ENCODE measurements at regions of chr2 and their contacts with region 1.

Region 1: GRCh38 chr2:151409601-151410484 is at the start of gene RIF1:
- DNase-seq: peak; percentile 92
- H3K4me3 ChIP-seq: peak within 1 kb of the TSS; percentile 81 to 91 (median 85)
- H3K27ac ChIP-seq: peak within 1 kb of the TSS; percentile 80
- H3K4me1 ChIP-seq: no peaks in the 10 kb centered on the region
- H3K27me3 ChIP-seq: no peaks in the 10 kb centered on the region
- CTCF ChIP-seq: peak; percentile 32 to 69
- total RNA-seq, gene RIF1: 33.7 to 45.0 TPM

Region 2: DNA sequence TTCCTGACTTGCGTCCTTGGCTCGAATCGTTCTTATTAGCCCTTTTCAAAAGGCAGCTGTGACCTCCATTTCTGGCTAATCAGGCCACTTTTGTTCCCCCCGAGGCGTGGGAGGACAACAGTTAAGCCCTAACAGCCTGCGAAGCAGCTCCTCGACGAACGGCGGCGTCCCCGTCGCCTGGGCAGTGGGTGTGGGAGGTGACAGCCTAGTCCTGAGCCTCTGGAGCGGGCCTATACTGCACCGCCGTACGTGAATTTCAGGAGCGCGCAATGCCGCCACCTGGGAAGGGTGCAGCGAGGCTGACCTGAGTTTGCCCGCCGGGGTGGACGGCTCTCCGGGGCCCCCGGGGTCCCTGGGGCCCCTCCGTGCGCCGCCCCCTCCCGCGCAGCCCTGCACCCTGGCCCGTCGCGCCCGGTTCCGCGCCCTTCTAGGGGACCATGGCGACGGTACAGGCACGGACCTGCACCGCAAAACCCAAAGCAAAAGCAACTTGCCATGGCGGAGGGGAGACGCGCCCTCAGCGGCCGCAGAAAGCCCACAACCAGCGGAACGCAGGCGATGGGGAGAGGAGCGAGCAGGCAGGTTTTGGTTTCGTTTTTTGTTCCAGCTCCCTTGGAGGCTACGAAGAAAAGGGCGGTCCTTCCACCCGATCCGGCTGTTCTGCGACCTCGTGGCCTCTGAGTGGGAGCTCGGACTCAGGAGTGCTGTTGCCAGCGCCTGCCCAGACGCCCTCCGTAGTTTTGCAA is 148.4 kb before region 1 on chr2 and contains the start of gene RBM43:
- CTCF ChIA-PET with region 1: no interaction called
- dilution Hi-C with region 1: no loop called
- in situ Hi-C with region 1: no loop called
- intact Hi-C with region 1: loop called (anchors 1 kb)
- DNase-seq: peak; percentile 81
- H3K4me3 ChIP-seq: peak within 1 kb of the TSS; percentile 74 to 82 (median 75)
- H3K27ac ChIP-seq: peak within 1 kb of the TSS; percentile 95
- H3K4me1 ChIP-seq: peaks cover 16% of the 10 kb centered on the region
- H3K27me3 ChIP-seq: no peaks in the 10 kb centered on the region
- CTCF ChIP-seq: no peak
- total RNA-seq, gene RBM43: 2.6 to 4.2 TPM

Region 3: GRCh38 chr2:151289369-151290088 is 120.3 kb before region 1 on chr2 and contains the start of gene NMI:
- CTCF ChIA-PET with region 1: no interaction called
- dilution Hi-C with region 1: no loop called
- in situ Hi-C with region 1: loop called in 1 of 2 experiments (anchors 10 kb)
- intact Hi-C with region 1: loop called (anchors 1 kb)
- DNase-seq: peak; percentile 82
- H3K4me3 ChIP-seq: peak within 1 kb of the TSS; percentile 64 to 86 (median 65)
- H3K27ac ChIP-seq: peak within 1 kb of the TSS; percentile 75
- H3K4me1 ChIP-seq: peaks cover 7% of the 10 kb centered on the region
- H3K27me3 ChIP-seq: no peaks in the 10 kb centered on the region
- CTCF ChIP-seq: no peak
- total RNA-seq, gene NMI: 2.5 to 6.7 TPM

Region 4: DNA sequence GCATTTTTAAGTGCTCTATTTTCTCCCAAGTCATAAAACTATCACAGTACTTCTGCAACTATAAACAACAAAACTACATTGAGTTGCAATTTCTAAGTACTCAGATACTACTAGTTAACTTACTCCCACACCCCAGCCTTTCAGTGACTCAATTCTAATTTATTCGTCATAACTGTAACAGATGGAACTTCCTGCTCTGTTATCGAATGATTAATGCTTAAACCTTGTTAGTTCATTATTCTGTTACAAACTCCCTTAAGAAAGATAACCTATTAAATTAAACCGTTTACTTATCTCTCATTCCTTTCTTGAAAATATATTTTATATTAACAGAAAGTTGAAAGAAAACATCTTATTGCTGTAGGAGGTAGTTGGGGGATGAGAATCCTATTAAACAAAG is 35.4 kb before region 1 on chr2:
- CTCF ChIA-PET with region 1: interaction called, 15 read pairs
- dilution Hi-C with region 1: no loop called
- in situ Hi-C with region 1: no loop called
- intact Hi-C with region 1: loop called (anchors 5 kb)
- DNase-seq: peak; percentile 83
- H3K4me3 ChIP-seq: no peak overlapping the region
- H3K27ac ChIP-seq: peak overlapping the region; percentile 32
- H3K4me1 ChIP-seq: no peaks in the 10 kb centered on the region
- H3K27me3 ChIP-seq: no peaks in the 10 kb centered on the region
- CTCF ChIP-seq: no peak

Measured in mammary epithelial cell (primary cell).